Activated CD4-positive, alpha-beta T cell treated with anti-CD3 and anti-CD28 coated beads for 36 hours (primary cell): ENCODE measurements at regions of chr2 and their contacts with region 1.

Region 1: DNA sequence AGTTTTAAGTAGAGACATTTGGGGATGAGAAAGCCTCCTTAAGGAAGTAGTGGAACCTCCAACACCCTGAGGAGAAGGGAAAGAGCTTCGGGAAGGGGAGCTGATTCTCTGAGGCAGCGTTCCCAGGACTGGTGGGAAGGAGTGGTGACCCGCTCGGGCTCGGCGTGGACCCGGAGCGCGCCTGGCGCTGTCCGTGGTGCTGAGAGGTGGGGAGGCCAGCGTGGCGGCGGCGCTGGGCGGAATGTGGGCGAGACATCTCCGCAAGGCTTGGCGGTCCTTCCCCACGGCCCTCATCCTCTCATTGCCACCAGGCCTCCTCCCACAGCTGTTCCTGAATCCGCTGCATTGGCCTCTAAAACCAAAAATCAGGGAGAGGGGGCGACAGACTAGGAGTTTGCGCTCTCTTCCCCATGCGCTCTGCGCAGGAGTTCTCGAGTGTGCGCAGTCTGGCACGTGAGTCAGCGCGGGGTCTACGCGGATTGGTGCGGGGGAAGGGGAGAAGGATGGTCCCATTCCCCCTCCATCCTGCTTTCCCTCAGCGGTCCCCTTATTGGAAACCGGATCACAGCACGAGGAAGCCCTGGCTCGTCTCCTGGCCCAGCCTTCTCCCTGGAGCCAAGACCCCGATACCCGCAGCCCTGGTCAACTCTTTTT is 857 bp downstream of the RESP18 start:
- DNase-seq: peak; percentile 58
- ATAC-seq: no peak
- H3K4me3 Mint-ChIP-seq: no peak overlapping the region
- H3K27ac Mint-ChIP-seq: no peak overlapping the region
- H3K4me1 Mint-ChIP-seq: no peaks in the 10 kb centered on the region
- H3K27me3 Mint-ChIP-seq: peaks cover 48% of the 10 kb centered on the region

Region 2: GRCh38 chr2:219308142-219309093 is 23.3 kb before region 1 on chr2:
- CTCF ChIA-PET with region 1: interaction called, 3 read pairs
- POLR2A ChIA-PET with region 1: interaction called, 9 read pairs
- intact Hi-C with region 1: loop called in 1 of 2 experiments (anchors 1 kb)
- DNase-seq: peak; percentile 87
- ATAC-seq: peak; percentile 92
- H3K4me3 Mint-ChIP-seq: no peak overlapping the region
- H3K27ac Mint-ChIP-seq: no peak overlapping the region
- H3K4me1 Mint-ChIP-seq: peaks cover 7% of the 10 kb centered on the region
- H3K27me3 Mint-ChIP-seq: peaks cover 38% of the 10 kb centered on the region